Activated naive CD4-positive, alpha-beta T cell treated with anti-CD3 and anti-CD28 coated beads for 36 hours (primary cell): ENCODE measurements at regions of chr7 and their contacts with region 1.

Region 1: DNA sequence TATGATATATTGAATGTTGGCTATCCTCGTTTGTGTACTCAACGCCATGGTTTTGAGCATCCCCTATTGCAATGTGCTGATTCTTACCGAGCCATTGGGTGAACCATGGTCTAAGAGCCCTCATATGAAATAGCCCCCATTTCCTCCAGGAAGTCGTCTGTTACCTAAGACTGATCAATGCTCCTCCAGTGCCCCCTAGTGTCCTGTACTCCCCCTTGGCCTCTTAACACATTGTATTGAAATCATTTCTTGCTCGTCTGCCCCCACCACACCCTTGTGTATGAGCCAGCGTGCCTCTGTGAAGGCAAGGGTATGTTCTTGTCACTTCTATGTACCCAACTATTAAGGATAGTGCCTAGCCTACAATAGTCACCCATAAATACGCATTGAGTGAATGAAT is 11.2 kb upstream of the SLC35B4 start:
- DNase-seq: peak; percentile 70
- H3K4me3 Mint-ChIP-seq: no peak overlapping the region
- H3K27ac Mint-ChIP-seq: no peak overlapping the region
- H3K4me1 Mint-ChIP-seq: peaks cover 3% of the 10 kb centered on the region
- H3K27me3 Mint-ChIP-seq: peaks cover 4% of the 10 kb centered on the region

Region 2: DNA sequence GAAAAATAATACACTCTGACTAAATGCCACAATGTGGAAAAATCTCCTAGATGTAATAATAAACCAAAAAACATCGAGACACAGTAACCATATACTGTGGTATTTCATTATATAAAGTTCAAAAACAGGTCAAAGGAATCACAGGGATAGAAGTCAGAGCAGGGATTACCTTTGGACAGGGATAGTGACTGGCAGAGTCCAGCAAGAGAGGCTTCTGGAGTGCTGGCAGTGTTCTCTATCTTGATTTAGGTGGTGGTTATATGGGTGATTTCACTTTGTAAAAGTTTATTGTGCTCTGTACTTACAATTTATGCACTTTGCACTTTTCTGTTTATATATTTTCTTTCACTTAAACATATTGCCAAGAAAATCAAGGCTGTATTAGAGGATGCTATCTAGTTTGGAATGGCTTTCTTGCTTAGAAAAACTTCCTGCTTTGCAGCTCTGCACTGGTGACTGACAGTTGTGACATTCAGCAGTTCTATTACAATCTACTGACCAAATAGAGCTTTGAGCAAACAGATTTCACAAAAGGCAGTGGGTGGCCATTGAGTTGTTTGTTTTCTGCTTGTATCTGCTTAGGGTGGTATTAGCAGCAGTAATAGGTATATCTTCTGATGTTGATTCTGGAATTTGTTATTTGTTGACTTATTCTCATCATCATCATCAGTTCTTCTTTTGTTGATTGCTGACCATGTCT is 464.4 kb before region 1 on chr7:
- CTCF ChIA-PET with region 1: no interaction called
- intact Hi-C with region 1: loop called (anchors 10 kb)
- DNase-seq: no peak
- H3K4me3 Mint-ChIP-seq: no peak overlapping the region
- H3K27ac Mint-ChIP-seq: no peak overlapping the region
- H3K4me1 Mint-ChIP-seq: no peaks in the 10 kb centered on the region
- H3K27me3 Mint-ChIP-seq: no peaks in the 10 kb centered on the region

Region 3: GRCh38 chr7:134121632-134122139 is 206.2 kb before region 1 on chr7:
- CTCF ChIA-PET with region 1: no interaction called
- intact Hi-C with region 1: no loop called
- DNase-seq: no peak
- H3K4me3 Mint-ChIP-seq: no peak overlapping the region
- H3K27ac Mint-ChIP-seq: no peak overlapping the region
- H3K4me1 Mint-ChIP-seq: peaks cover 2% of the 10 kb centered on the region
- H3K27me3 Mint-ChIP-seq: no peaks in the 10 kb centered on the region

Region 4: GRCh38 chr7:134685250-134685649 is 357.4 kb after region 1 on chr7:
- CTCF ChIA-PET with region 1: no interaction called
- intact Hi-C with region 1: no loop called
- DNase-seq: no peak
- H3K4me3 Mint-ChIP-seq: no peak overlapping the region
- H3K27ac Mint-ChIP-seq: no peak overlapping the region
- H3K4me1 Mint-ChIP-seq: peaks cover 5% of the 10 kb centered on the region
- H3K27me3 Mint-ChIP-seq: no peaks in the 10 kb centered on the region